Endothelial cell of umbilical vein (primary cell): ENCODE measurements at regions of chr3 and their contacts with region 1.

Region 1: DNA sequence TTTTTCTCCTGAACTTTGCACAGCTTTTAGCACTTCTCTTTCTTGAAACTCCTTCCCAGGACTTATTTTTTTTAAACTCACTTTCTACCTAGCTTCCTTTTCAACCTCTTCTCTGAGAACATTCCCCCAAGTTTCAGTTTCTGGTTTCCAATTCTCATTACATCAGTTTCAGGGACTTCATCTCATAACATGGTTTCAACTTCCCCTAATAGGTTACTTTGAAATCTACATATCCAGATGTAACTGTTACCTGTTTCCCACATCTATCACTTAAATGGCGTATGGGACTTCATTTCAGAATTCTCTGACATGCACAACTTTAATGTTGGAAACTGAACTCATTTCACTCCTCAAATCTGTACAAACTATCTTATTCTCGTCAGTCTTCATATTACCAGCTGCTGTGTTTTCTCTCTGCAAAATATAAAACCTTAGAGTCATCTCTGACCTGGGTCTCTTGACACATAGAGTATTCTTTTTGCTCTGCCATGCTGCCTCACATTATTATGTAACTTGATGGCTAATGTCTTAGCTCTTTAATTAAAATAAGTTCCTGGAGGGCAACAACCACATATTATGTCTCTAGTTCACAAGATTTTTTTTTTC is 58.4 kb downstream of the NME9 start:
- DNase-seq: no peak
- H3K4me3 ChIP-seq: no peak overlapping the region
- H3K27ac ChIP-seq: no peak overlapping the region
- H3K4me1 ChIP-seq: no peaks in the 10 kb centered on the region
- H3K27me3 ChIP-seq: no peaks in the 10 kb centered on the region
- CTCF ChIP-seq: no peak
- POLR2A ChIP-seq: no peak

Region 2: GRCh38 chr3:138078901-138079344 is 192.4 kb before region 1 on chr3:
- CTCF ChIA-PET with region 1: no interaction called
- POLR2A ChIA-PET with region 1: no interaction called
- dilution Hi-C with region 1: no loop called
- intact Hi-C with region 1: no loop called
- DNase-seq: no peak
- H3K4me3 ChIP-seq: no peak overlapping the region
- H3K27ac ChIP-seq: no peak overlapping the region
- H3K4me1 ChIP-seq: no peaks in the 10 kb centered on the region
- H3K27me3 ChIP-seq: no peaks in the 10 kb centered on the region
- CTCF ChIP-seq: no peak
- POLR2A ChIP-seq: no peak

Region 3: GRCh38 chr3:138180375-138181029 is 90.8 kb before region 1 on chr3:
- CTCF ChIA-PET with region 1: interaction called, 11 read pairs
- POLR2A ChIA-PET with region 1: no interaction called
- dilution Hi-C with region 1: no loop called
- intact Hi-C with region 1: no loop called
- DNase-seq: peak; percentile 50
- H3K4me3 ChIP-seq: no peak overlapping the region
- H3K27ac ChIP-seq: no peak overlapping the region
- H3K4me1 ChIP-seq: no peaks in the 10 kb centered on the region
- H3K27me3 ChIP-seq: peaks cover 7 to 13% of the 10 kb centered on the region in 2 experiments
- CTCF ChIP-seq: peak; percentile 19 to 21
- POLR2A ChIP-seq: no peak

Region 4: GRCh38 chr3:138281561-138281960 is 10.3 kb after region 1 on chr3:
- CTCF ChIA-PET with region 1: interaction called, 11 read pairs
- POLR2A ChIA-PET with region 1: no interaction called
- dilution Hi-C with region 1: no loop called
- intact Hi-C with region 1: no loop called
- DNase-seq: no peak
- H3K4me3 ChIP-seq: no peak overlapping the region
- H3K27ac ChIP-seq: no peak overlapping the region
- H3K4me1 ChIP-seq: no peaks in the 10 kb centered on the region
- H3K27me3 ChIP-seq: no peaks in the 10 kb centered on the region
- CTCF ChIP-seq: no peak
- POLR2A ChIP-seq: no peak

Region 5: GRCh38 chr3:138329127-138329983 is 58.1 kb after region 1 on chr3 and contains the start of gene NME9:
- CTCF ChIA-PET with region 1: no interaction called
- POLR2A ChIA-PET with region 1: no interaction called
- dilution Hi-C with region 1: no loop called
- intact Hi-C with region 1: no loop called
- DNase-seq: peak; percentile 88
- H3K4me3 ChIP-seq: peak within 1 kb of the TSS; percentile 32 to 53 (median 52)
- H3K27ac ChIP-seq: no peak within 1 kb of the TSS
- H3K4me1 ChIP-seq: peaks cover 20% of the 10 kb centered on the region
- H3K27me3 ChIP-seq: peaks cover 2 to 3% of the 10 kb centered on the region in 2 experiments
- CTCF ChIP-seq: peak; percentile 54 to 69
- POLR2A ChIP-seq: no peak
- total RNA-seq, gene NME9: not detected in 2 replicates

Region 6: DNA sequence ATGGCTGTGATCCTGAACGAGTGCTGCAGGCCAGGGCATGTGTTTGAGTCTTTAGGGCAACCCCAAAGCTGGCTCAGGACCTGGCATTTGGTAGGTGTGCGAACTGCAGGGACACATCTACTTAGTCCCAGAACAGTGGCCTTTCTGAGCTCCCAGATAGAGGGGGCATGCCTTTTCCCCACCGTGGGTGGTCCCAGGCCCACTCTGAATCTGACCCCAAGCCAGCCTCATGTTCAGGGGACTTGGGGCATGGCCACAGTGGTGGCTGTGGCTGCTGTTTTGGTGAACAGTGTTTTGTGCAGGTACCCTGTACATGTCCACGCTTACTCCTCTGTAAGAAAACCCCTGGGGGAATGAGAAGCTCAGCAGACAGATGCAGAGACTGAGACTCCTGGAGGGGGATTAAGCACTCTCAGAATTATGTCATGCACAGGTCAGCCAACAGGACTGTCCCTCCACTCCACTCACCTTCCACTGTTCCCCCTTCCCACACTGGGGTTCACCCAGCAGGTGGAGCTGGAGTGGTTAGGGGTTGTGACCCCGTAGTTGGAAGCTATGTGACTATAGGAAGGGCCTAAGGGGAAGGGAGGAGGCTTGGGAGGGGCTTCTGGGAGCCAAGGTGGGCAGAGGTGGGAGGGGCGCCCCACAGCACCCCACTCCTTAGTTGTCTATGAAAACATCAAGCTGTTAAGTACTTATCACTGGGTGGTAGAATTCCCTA is 179.6 kb after region 1 on chr3:
- CTCF ChIA-PET with region 1: no interaction called
- POLR2A ChIA-PET with region 1: no interaction called
- dilution Hi-C with region 1: no loop called
- intact Hi-C with region 1: no loop called
- DNase-seq: no peak
- H3K4me3 ChIP-seq: no peak overlapping the region
- H3K27ac ChIP-seq: no peak overlapping the region
- H3K4me1 ChIP-seq: no peaks in the 10 kb centered on the region
- H3K27me3 ChIP-seq: no peaks in the 10 kb centered on the region
- CTCF ChIP-seq: no peak
- POLR2A ChIP-seq: no peak